ENCODE measurements at regions of chr14 and their contacts with region 1.

Region 1: DNA sequence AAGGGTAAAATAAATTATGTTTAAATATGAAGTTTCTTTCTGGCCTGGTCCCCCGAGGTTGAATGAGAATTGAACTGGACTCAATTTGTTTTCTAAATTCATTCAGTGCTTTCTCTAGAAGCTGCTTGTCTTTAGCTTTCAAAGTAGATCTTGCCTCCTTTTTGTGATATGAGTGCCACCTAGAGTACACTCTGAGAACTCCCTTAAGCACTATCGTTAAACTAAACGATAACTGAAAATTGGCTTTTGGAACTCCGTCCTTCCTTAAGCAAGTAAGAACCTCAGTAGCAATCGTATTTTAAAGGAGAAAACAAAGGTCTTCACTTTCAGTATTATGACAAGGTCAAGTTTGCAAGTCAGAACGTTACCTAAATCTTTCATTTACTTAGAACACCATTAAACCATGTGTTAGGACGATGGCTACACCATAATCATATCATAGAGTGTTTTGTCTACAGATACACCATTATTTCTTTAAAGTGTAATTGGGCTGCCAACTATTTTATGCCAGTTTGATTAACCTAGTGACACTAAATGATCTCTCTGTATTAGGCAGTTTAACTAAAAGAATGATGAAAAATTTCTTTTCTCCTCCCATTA is 364.8 kb downstream of the SNAPC1 start:
- DNase-seq: no peak
- H3K4me3 Mint-ChIP-seq: no peak overlapping the region
- H3K27ac Mint-ChIP-seq: no peak overlapping the region
- H3K4me1 Mint-ChIP-seq: no peaks in the 10 kb centered on the region
- H3K27me3 Mint-ChIP-seq: peaks cover 23% of the 10 kb centered on the region

Region 2: DNA sequence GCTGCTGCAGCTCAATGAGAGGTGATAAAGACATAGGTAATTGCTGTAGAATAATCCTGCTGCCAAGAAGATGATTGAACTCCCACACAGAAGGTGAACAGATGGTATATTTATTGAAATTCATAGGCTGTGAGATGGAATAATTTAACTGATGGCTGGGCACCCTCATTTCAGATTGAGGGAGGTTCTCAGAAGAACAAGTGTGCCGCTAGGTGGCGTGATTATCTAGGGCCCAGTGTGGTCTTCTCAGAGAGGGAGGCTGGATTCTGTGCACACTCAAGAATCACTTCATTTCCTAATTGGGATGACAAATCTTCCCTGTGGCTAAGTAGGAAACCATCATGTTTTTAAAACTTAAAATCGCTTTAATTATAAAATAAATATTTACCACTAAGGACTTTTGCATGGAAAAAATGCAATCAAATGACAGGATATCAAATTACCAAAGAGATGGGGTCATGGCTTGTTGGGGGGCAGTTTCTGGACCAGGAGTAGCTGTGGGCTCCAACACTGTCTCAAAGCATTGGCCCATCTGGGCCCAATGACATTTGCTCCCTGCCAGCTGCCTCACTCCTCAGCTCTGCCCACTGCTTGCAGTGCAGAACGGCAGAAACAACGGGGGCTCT is 232.4 kb before region 1 on chr14:
- CTCF ChIA-PET with region 1: interaction called, 49 read pairs
- DNase-seq: peak; percentile 72
- H3K4me3 Mint-ChIP-seq: no peak overlapping the region
- H3K27ac Mint-ChIP-seq: no peak overlapping the region
- H3K4me1 Mint-ChIP-seq: peaks cover 16% of the 10 kb centered on the region
- H3K27me3 Mint-ChIP-seq: peaks cover 34% of the 10 kb centered on the region

Region 3: DNA sequence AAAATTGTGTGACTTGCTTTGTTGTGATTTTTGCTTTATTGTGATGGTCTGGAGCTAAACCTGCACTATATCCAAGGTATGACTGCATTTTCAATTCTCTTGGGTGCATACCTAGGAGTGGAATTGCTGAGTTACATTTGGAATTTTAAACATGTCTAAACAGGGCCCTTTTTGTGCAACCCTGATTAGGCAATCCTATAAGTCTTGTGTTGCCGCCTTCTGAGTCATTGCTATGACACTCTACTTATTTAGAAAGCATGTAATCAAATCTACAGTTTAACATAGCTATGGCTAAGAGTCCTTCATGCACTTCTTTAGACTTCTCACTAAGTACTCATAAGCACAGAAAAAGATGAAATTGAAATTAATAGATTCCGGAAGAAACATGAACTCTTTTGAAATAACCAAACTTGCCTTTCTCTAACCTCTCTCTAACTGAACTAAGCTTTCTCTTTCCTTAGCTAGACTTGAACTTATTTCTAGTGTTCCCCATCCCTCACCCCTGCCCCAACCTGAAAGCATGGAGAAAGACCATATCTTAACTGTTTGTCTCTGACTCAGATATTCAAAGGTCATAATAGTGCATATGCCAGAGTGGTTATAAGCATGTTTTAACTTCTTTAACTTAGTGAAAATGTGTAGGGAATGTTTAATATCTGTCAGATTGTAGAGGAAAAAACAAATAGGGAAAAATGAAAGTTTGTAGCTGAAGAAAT is 161.8 kb before region 1 on chr14:
- CTCF ChIA-PET with region 1: no interaction called
- DNase-seq: no peak
- H3K4me3 Mint-ChIP-seq: no peak overlapping the region
- H3K27ac Mint-ChIP-seq: no peak overlapping the region
- H3K4me1 Mint-ChIP-seq: no peaks in the 10 kb centered on the region
- H3K27me3 Mint-ChIP-seq: peaks cover 8% of the 10 kb centered on the region

Region 4: DNA sequence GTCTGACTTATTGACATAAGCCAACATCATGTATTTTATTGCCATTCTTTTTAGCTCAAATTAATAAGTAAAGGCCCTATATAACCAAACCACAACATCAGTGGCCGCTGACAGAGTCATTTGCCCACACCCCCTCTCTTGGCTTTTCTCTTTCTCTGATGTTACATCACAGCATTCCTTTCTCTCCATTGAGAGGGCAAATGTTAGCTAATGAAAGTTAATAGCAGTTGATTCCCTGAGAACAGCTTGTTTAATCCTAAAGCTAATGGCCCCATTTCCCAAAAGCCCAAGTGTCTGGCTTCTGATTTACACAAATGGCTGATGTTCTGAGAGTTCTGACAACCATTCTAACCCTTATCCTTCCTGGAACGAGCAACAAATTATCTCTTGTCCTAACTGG is 55.9 kb before region 1 on chr14:
- CTCF ChIA-PET with region 1: no interaction called
- DNase-seq: no peak
- H3K4me3 Mint-ChIP-seq: no peak overlapping the region
- H3K27ac Mint-ChIP-seq: no peak overlapping the region
- H3K4me1 Mint-ChIP-seq: no peaks in the 10 kb centered on the region
- H3K27me3 Mint-ChIP-seq: peaks cover 11% of the 10 kb centered on the region